BJ (cell line): ENCODE measurements at regions of chr11 and their contacts with region 1.

Region 1: GRCh38 chr11:71977743-71978418 is 20.8 kb upstream of the IL18BP start:
- DNase-seq: no peak
- H3K4me3 ChIP-seq: no peak overlapping the region
- H3K27me3 ChIP-seq: no peaks in the 10 kb centered on the region
- CTCF ChIP-seq: peak; percentile 76

Region 2: GRCh38 chr11:71962428-71963038 is 15.3 kb before region 1 on chr11:
- CTCF ChIA-PET with region 1: interaction called, 19 read pairs
- POLR2A ChIA-PET with region 1: no interaction called
- DNase-seq: no peak
- H3K4me3 ChIP-seq: no peak overlapping the region
- H3K27me3 ChIP-seq: no peaks in the 10 kb centered on the region
- CTCF ChIP-seq: no peak

Region 3: DNA sequence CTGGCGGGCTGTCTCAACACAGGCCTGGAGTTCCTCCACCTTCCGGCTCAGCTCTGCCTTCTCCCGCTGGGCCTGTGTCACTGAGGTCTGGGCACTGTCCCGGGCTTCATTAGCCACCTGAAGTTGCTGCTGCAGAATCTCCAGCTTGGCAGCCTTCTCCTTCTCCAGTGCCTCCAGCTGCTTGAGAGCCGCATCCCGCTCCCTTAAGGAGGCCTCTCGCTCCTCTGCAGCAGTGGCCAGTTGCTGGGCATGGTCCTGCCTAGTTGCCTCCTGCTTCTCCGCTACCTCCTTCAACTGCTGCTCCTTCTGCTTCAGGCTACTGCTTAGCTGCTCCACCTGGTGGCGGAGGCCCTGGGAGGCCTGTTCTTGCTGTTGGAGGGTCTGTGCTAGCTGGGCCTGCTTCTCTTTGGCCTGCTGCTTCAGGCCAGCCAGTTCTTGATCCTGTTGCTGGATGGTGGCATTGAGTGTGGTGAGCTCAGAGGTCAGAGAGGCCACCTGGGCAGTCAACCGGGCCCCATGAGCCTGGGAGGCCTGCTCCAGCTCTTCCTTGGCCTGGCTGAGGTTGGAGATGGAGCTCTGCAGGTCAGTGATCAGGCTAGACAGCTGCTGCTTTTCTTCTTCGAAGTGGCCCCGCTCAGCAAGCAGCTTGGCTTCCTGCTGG is 37.8 kb after region 1 on chr11:
- CTCF ChIA-PET with region 1: interaction called, 32 read pairs
- POLR2A ChIA-PET with region 1: interaction called, 3 read pairs
- DNase-seq: no peak
- H3K4me3 ChIP-seq: no peak overlapping the region
- H3K27me3 ChIP-seq: no peaks in the 10 kb centered on the region
- CTCF ChIP-seq: peak; percentile 55

Region 4: GRCh38 chr11:72091005-72091691 is 113.3 kb after region 1 on chr11:
- CTCF ChIA-PET with region 1: interaction called, 25 read pairs
- POLR2A ChIA-PET with region 1: no interaction called
- DNase-seq: no peak
- H3K4me3 ChIP-seq: no peak overlapping the region
- H3K27me3 ChIP-seq: no peaks in the 10 kb centered on the region
- CTCF ChIP-seq: peak; percentile 90

Region 5: DNA sequence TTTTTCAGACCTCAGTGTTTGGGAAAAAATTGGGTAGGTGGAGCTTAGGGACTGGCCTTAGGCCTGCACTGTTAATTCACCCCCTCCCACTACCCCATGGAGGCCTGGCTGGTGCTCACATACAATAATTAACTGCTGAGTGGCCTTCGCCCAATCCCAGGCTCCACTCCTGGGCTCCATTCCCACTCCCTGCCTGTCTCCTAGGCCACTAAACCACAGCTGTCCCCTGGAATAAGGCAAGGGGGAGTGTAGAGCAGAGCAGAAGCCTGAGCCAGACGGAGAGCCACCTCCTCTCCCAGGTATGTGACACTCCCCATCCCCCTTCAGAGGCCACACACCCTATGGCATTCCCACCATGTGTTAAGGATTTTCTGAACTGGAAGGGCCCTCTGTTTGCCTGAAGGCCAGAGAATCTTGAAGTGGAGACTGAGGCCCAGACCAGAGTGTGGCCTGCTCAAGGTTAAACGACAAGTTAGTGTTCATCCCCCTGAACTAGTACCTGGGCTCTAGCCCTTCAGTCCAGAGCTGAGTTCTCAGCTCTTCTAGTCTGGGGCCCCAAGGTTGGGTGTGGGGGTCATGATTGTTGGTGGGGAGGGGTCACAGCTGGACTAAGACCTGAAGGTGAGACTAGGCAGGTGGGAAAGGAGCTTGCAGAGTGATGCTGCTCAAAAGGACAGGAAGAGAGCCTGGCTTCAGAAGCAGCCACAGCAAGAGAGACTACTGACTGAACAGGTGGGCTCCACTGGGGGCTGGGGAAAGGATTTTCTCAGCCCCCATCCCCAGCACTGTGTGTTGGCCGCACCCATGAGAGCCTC is 211.8 kb after region 1 on chr11:
- CTCF ChIA-PET with region 1: interaction called, 16 read pairs
- POLR2A ChIA-PET with region 1: no interaction called
- DNase-seq: no peak
- H3K4me3 ChIP-seq: no peak overlapping the region
- H3K27me3 ChIP-seq: no peaks in the 10 kb centered on the region
- CTCF ChIP-seq: no peak

Region 6: DNA sequence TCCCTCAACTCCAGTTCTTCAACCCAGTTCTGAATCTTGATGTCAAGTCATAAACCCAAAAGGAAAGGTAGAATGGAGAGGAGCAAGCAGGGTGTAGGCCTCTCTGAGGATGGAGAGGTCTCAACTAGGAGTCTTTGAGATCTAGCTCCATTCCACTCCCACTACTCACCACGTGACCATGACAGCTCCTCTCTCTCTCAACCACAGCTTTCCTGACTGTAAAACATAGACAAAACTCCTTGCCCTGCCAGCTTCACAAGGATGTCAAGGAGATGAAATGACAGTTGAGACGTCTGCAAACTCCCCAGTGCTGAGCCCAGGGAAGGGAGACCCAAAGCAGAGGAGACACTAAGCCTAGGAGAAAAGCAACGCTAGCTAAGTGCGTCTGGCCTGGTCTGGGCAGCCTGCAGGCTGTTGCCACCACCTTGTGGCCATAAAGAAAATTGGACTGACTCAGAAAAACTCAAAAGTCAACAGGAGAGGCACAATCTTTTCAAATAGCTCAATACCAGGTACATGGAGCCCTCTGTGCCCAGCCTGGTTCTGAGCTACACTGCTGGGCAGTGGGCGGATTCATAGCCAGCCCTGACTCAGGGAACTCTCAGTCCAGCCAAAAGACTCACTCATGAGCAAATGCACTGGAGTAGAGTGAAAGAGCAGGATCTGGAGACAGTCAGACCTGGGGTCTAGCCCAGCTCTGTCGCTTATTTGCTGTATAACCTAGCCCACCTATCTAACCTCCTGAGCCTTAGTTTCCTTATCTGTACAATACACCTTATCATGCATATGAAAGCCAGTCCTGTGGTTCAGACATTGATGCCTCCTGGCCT is 453.1 kb after region 1 on chr11:
- CTCF ChIA-PET with region 1: interaction called, 38 read pairs
- POLR2A ChIA-PET with region 1: no interaction called
- DNase-seq: no peak
- H3K4me3 ChIP-seq: no peak overlapping the region
- H3K27me3 ChIP-seq: no peaks in the 10 kb centered on the region
- CTCF ChIP-seq: peak; percentile 85

Region 7: DNA sequence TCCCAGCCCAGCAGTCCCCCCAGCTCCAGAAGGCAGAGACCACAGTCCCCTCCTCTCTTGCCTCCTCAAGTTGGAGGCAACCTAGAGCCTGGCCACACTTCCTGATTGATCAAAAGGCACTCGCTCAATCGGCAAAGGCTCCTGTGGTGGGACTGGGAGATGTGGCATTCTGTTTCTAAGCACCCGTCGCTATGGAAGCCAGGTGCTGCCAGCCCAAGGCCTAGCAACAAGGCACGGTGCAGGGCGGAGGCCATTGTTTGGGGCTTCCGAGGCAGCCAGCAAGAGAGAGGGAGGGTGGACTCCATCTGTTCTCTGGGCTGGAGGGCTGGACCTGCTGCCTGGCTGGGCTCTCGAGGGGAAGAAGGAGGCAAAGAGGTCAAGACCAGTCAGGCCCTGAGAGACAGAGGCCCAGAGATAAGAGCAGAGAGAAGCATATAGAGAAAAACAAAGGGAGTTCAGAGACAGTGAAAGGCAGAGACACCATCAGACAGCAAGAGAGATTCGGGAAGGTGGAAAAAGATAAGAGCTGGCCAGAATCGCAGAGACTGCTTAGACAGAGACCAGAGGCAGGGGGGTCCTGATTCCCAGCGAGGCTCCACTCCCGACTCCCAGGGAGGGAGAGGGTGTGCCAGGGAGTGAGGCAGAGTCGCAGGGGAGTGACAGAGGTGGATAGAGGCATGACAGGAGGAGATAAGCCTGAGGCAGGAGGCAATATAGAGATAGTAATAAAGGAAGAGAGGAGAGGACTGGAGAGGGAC is 675.2 kb after region 1 on chr11:
- CTCF ChIA-PET with region 1: no interaction called
- POLR2A ChIA-PET with region 1: no interaction called
- DNase-seq: no peak
- H3K4me3 ChIP-seq: no peak overlapping the region
- H3K27me3 ChIP-seq: peaks cover 17% of the 10 kb centered on the region
- CTCF ChIP-seq: no peak